ENCODE measurements at regions of chr13 and their contacts with region 1.

Region 1: GRCh38 chr13:44435142-44435982 is 61.7 kb downstream of the SERP2 start:
- DNase-seq: peak; percentile 99
- H3K4me3 ChIP-seq: peak overlapping the region; percentile 69
- H3K27ac ChIP-seq: peak overlapping the region; percentile 92
- H3K4me1 ChIP-seq: peaks cover 13% of the 10 kb centered on the region
- H3K27me3 ChIP-seq: no peaks in the 10 kb centered on the region
- CTCF ChIP-seq: no peak

Region 2: GRCh38 chr13:42947925-42948324 is 1487.4 kb before region 1 on chr13:
- CTCF ChIA-PET with region 1: no interaction called
- POLR2A ChIA-PET with region 1: interaction called, 10 read pairs
- intact Hi-C with region 1: no loop called
- DNase-seq: no peak
- H3K4me3 ChIP-seq: no peak overlapping the region
- H3K27ac ChIP-seq: no peak overlapping the region
- H3K4me1 ChIP-seq: no peaks in the 10 kb centered on the region
- H3K27me3 ChIP-seq: no peaks in the 10 kb centered on the region
- CTCF ChIP-seq: no peak

Region 3: DNA sequence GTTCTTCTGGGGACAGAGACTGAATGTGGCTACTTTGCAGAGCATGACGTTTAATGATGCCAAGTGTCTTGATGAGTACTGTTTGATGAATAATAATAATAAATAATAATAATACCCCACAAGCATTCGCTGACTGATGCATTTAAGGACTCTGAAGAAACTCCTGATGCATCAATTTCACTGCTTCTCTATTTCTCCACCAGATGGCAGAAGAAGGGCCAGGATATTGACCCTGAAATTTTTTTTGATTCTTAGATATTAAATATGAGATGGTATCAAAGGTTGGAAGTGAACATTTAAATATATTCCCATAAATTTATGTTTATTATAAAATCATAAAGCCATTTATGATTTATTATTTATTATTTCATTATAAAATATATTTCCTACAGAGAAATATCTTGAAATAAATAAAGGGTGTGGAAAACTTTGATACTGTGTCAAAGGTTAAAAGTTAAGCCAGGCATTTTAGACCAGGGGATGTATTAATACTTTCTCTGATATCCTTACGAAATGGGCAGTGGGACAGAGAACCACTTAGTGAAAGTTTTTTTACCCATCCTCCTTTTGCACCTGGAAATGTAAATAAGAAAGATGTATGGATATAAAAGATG is 384.8 kb before region 1 on chr13:
- CTCF ChIA-PET with region 1: interaction called, 7 read pairs
- POLR2A ChIA-PET with region 1: no interaction called
- intact Hi-C with region 1: loop called (anchors 1 kb)
- DNase-seq: peak; percentile 36
- H3K4me3 ChIP-seq: no peak overlapping the region
- H3K27ac ChIP-seq: no peak overlapping the region
- H3K4me1 ChIP-seq: no peaks in the 10 kb centered on the region
- H3K27me3 ChIP-seq: peaks cover 5% of the 10 kb centered on the region
- CTCF ChIP-seq: peak; percentile 72

Region 4: DNA sequence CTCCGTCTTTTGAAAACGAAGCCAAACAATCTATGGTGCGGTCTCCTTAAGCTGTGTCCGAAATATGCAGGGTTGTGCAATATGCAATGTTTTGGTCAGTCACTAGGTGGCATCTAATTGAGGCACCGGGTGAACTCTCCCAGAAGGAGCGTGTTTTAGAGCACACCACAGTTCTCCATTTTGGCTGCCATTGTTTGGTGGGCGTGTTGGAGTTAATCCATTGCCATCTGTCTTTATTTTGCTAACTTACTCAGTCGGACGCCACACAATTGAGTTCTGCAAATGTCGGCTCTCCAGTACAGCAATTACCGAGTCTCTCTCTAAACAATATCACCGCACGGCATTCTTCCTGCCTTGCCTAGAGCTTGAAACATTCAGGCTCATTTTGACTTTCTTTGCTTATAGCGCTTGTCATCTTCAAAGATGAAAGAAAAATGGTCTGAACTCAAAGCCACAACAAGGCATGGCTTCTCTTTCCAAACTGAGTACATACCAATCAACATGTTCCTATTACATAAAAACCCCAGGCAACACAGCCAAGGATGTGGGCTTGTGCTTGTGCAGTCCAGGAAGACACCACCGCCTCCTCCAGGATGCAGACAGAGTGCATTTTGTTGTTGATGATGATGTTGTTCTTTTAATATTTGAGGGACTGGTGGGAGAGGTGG is 243.7 kb before region 1 on chr13:
- CTCF ChIA-PET with region 1: no interaction called
- POLR2A ChIA-PET with region 1: no interaction called
- intact Hi-C with region 1: loop called (anchors 5 kb)
- DNase-seq: peak; percentile 67
- H3K4me3 ChIP-seq: no peak overlapping the region
- H3K27ac ChIP-seq: no peak overlapping the region
- H3K4me1 ChIP-seq: no peaks in the 10 kb centered on the region
- H3K27me3 ChIP-seq: no peaks in the 10 kb centered on the region
- CTCF ChIP-seq: peak; percentile 55

Region 5: DNA sequence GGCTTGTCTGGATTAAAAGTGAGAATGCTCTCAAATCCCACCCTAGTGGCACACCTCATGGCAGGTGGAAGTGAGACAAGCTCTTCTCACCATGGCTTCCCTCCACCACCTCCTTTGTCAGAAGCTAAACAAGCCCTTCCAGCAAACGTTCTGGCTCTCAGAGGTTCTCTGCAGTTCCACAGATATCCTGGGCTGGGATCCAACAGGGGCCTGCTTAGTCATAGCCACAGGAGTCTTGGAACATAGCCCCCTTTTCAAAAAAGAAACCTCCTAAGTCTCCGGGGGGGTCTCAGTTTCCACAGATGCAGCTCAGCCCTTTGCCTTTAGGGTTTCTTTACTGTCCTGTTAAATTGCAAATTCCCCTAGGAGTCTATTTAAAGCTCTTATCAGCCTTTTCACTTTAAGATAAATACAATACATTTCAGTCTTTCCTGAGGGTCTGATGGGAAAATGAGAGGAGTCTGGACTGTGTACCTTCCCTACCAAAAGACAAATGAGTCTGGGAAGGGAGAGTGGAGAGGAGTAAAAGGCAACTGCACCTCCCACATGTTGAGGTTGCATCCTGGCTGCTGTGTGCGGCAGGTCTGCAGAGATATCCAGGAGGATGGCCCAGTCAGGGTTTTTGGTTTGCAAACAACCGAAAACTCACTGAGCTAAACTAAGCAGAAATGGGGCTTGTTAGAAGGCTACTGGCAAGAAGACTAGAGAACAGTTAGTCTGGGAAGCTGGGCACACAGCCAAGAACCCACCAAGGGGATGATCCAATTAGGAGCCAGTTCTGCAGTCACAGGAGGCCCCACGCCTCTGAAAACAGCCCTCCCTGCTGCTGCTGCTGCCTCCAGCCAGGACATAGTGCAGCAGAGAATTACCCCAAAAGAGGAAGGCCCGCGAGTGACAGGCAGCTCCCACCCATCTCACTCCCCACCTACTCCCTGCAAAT is 103.2 kb before region 1 on chr13:
- CTCF ChIA-PET with region 1: interaction called, 20 read pairs
- POLR2A ChIA-PET with region 1: no interaction called
- intact Hi-C with region 1: loop called (anchors 5 kb)
- DNase-seq: peak; percentile 95
- H3K4me3 ChIP-seq: peak overlapping the region; percentile 15
- H3K27ac ChIP-seq: peak overlapping the region; percentile 84
- H3K4me1 ChIP-seq: peaks cover 30% of the 10 kb centered on the region
- H3K27me3 ChIP-seq: no peaks in the 10 kb centered on the region
- CTCF ChIP-seq: no peak

Region 6: GRCh38 chr13:44605275-44605674 is 169.9 kb after region 1 on chr13:
- CTCF ChIA-PET with region 1: no interaction called
- POLR2A ChIA-PET with region 1: no interaction called
- intact Hi-C with region 1: no loop called
- DNase-seq: no peak
- H3K4me3 ChIP-seq: no peak overlapping the region
- H3K27ac ChIP-seq: no peak overlapping the region
- H3K4me1 ChIP-seq: peaks cover 3% of the 10 kb centered on the region
- H3K27me3 ChIP-seq: no peaks in the 10 kb centered on the region
- CTCF ChIP-seq: no peak

Measured in A673 (cell line).